Activated CD8-positive, alpha-beta memory T cell treated with anti-CD3 and anti-CD28 coated beads, Interleukin-2, amount 10 ng/mL, durations not matched to agents 7 days and 5 days (primary cell): ENCODE measurements at regions of chr17 and their contacts with region 1.

Region 1: GRCh38 chr17:50200457-50201275 is 765 bp downstream of the COL1A1 start:
- DNase-seq: peak; percentile 89
- ATAC-seq: peak; percentile 85
- H3K4me3 Mint-ChIP-seq: peak overlapping the region; percentile 61
- H3K27ac Mint-ChIP-seq: no peak overlapping the region
- H3K4me1 Mint-ChIP-seq: peaks cover 13% of the 10 kb centered on the region
- H3K27me3 Mint-ChIP-seq: peaks cover 58% of the 10 kb centered on the region

Region 2: GRCh38 chr17:50161023-50161910 is 39.4 kb before region 1 on chr17:
- CTCF ChIA-PET with region 1: interaction called, 17 read pairs
- DNase-seq: peak; percentile 96
- ATAC-seq: peak; percentile 98
- H3K4me3 Mint-ChIP-seq: peak overlapping the region; percentile 77
- H3K27ac Mint-ChIP-seq: peak overlapping the region; percentile 67
- H3K4me1 Mint-ChIP-seq: peaks cover 28% of the 10 kb centered on the region
- H3K27me3 Mint-ChIP-seq: peaks cover 8% of the 10 kb centered on the region

Region 3: DNA sequence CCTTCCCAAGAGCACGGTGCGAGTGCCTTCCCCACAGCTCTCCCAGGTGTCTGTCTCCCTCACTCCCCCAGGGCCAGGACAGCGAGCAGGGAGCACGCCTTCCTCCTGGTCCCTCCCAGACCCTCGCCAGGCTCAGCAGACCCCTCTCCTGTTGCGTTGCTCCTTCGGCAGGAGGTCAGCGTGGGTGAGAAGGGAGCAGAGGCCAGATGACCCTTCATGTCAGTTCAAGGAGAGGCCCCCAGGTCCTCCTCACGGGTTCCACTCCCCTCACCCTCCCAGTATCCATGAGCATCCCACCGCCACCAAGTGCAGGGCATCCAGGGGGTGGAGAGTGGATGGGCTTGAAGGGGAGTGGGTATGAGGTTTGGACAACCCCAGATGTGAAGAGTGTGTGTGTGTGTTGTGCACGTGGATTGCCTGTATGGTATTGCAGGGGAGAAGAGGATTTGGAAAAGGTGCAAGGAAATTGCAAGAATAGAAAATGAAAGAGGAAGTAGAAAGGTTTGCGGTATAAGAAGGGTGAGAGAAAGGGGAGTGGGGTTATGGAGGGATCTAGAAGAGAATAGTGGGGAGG is 17.2 kb before region 1 on chr17:
- CTCF ChIA-PET with region 1: interaction called, 17 read pairs
- DNase-seq: no peak
- ATAC-seq: peak; percentile 43
- H3K4me3 Mint-ChIP-seq: peak overlapping the region; percentile 47
- H3K27ac Mint-ChIP-seq: peak overlapping the region; percentile 60
- H3K4me1 Mint-ChIP-seq: peaks cover 17% of the 10 kb centered on the region
- H3K27me3 Mint-ChIP-seq: no peaks in the 10 kb centered on the region

Region 4: DNA sequence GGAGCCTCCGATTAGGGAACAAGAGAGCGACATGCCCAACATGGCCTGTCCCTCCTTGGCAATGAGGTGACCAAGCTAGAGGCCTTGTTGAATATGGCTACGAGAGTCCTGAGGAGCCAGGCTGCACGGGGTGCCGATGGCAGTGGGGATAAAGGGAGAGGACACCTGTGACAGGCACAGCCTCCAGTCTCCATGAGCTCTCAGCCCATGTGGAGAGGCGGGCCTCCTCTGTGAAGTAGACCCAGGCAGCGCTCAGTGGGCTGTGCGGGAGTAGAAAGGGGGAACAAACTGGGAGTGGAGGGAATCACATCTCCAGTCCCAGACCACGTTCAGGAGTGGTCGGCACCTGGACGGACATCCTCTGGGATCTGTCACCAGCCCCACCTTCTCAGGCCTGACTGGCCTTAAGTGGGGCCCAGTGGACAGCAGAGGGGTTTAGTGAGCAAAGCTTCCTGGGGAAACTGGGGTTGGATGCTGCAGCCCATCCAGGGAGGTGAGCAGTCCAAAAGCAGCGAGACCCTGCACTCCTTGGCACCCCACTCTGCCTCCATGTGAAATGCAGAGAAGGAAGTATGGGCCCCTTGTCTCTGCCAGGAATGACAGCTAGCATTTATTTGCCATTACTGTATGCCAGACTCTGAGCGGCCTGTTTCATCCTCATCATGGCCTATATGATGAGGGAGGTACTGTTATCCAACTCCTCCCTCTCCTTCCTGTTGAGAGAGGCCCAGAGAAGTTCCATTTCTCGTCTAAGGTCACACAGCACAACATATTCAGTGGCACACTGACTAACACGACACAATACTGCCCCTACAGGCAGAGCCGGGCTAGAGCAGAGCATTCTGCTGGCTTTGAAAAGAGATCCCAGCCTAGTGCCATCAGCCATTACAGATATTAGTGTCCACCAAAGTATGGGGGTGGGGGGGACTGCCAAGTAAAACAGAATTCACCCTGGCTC is 69.1 kb after region 1 on chr17:
- CTCF ChIA-PET with region 1: interaction called, 244 read pairs
- DNase-seq: peak; percentile 82
- ATAC-seq: peak; percentile 80
- H3K4me3 Mint-ChIP-seq: no peak overlapping the region
- H3K27ac Mint-ChIP-seq: no peak overlapping the region
- H3K4me1 Mint-ChIP-seq: peaks cover 11% of the 10 kb centered on the region
- H3K27me3 Mint-ChIP-seq: peaks cover 12% of the 10 kb centered on the region

Region 5: DNA sequence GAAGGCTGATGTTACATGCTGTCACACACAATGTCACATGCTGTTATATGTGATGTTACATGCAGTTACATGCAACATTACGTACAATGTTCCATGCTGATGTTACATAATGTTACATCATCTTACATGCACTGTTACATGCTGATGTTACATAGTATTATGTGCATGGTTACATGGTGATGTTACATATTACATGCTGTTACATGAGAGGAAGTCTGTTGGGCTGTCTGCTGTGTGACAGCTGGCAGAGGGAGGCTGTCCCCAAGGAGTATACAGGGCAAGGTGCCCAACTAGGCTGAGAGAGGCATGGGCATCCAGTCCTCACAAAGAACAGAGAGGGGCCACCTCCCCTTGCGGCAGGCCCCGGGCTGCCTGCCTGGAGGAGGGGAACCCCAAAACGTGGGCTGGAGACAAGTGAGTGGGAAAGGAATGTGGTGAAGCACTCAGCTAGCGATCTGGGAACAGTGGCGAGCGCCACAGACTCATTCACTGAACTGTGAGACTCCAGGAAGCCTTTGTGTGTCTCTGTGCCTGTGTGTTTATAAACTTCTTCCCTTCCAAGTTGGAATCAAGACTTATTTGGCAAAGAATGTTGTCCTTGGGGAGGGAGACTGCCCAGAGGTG is 104.2 kb after region 1 on chr17:
- CTCF ChIA-PET with region 1: interaction called, 199 read pairs
- DNase-seq: no peak
- ATAC-seq: no peak
- H3K4me3 Mint-ChIP-seq: no peak overlapping the region
- H3K27ac Mint-ChIP-seq: no peak overlapping the region
- H3K4me1 Mint-ChIP-seq: peaks cover 16% of the 10 kb centered on the region
- H3K27me3 Mint-ChIP-seq: peaks cover 7% of the 10 kb centered on the region